SK-N-SH (cell line): ENCODE measurements at regions of chr18 and their contacts with region 1.

Region 1: DNA sequence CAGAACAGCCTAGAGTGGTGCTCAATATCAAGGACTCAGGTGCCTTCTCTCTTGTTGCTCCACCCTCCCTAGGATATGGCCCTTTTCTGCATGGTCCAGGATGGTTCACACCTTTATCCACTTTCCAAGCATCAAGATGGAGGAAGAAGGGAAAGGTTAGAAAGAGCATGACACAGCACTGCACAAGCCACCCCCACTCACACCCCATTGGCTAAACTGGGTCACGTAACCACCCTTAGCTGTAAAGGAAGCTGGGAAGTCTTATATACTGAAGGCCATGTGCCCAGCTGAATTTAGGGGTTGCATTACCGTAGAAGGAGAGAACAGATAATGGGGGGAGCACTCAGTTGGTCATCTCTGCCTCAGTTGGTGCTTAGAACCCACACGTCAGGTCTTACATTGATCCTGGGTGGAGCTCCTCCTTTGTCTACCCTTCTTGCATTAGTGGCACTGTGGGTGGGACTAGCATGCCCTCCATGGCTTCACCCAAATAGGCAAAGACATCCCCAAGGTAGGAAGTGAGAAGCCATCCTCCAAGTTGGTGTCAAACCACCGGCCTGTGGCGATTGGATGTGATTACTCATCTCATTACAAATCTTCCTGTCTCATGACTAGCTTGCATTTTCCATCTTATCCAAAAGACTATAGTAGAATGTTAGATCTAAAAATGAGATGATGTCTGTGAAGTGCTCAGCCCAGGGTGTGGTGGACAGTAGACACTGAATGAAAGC is 248.5 kb downstream of the HAUS1 start:
- DNase-seq: no peak
- H3K4me3 ChIP-seq: no peak overlapping the region
- H3K27ac ChIP-seq: no peak overlapping the region
- H3K4me1 ChIP-seq: peaks cover 0 to 51% of the 10 kb centered on the region in 2 experiments; a peak in 2 of 4 replicates
- H3K27me3 ChIP-seq: no peaks in the 10 kb centered on the region
- CTCF ChIP-seq: no peak
- EP300 ChIP-seq: no peak
- RAD21 ChIP-seq: no peak

Region 2: DNA sequence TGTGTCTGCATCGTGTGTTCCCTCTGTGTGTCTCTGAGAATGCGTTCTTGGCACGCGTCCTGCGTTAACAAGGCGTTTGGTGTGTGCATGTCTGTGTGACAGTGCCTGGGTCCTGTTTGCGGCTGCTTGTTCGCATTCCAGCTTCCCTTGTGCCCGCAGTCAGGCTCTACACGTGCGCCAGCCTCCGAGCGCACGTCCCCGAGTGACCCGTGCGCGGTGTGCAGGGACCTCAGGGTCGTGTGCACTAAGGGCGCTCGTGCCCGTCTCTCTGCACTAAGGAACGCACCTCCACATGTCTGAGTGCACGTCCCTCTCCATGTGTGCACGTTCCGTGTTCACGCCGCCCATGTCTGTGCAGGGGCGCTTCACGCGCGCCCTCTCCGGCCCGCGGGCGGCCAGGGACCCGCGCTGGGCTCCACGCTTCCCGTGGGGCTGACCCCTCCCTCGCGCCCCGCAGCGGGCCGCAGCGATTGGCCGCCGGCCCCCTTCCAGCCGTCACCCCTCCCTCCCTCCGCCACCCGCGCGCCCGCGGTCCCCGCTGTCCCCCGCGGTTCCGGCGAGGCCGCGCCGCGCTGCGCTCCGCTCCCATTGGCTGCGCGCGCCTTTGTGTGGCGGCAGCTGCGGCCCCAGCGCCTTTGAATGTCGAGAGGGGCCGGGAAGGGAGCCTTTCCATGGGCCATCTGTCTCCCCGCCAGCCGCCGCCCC is 19.1 kb before region 1 on chr18:
- CTCF ChIA-PET with region 1: interaction called, 11 read pairs
- POLR2A ChIA-PET with region 1: interaction called, 11 read pairs
- DNase-seq: peak; percentile 96
- H3K4me3 ChIP-seq: peak overlapping the region; percentile 57 to 60
- H3K27ac ChIP-seq: peak overlapping the region in 1 of 2 experiments; percentile 86; a peak in 2 of 4 replicates
- H3K4me1 ChIP-seq: peaks cover 11 to 41% of the 10 kb centered on the region in 2 experiments; a peak in 3 of 4 replicates
- H3K27me3 ChIP-seq: peaks cover 6% of the 10 kb centered on the region; the same call in 1 of the 2 replicates
- CTCF ChIP-seq: no peak
- EP300 ChIP-seq: no peak
- RAD21 ChIP-seq: no peak

Region 3: DNA sequence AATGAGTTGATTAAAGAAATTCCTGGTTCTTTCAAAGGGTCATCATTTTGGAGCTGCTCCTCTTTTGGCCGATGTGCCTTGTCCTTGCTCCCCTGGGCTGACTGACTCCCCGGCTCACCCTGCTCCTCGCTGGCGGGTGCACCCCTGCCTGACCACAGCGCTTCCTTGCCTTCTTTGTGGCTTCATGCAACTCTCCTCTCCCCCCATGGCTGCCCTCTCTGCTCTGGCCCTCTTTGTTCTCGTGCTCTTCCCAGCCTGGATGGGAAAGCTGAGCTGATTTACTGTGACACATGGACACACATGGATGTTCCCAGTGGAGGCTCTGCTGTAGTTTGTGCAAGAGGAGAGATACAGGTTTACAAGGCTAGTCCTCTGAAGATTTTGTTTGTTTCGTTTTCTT is 13.9 kb before region 1 on chr18:
- CTCF ChIA-PET with region 1: interaction called, 11 read pairs
- POLR2A ChIA-PET with region 1: interaction called, 11 read pairs
- DNase-seq: no peak
- H3K4me3 ChIP-seq: no peak overlapping the region
- H3K27ac ChIP-seq: peak overlapping the region in 1 of 2 experiments; percentile 71; a peak in 1 of 4 replicates
- H3K4me1 ChIP-seq: peaks cover 11 to 42% of the 10 kb centered on the region in 2 experiments; a peak in 3 of 4 replicates
- H3K27me3 ChIP-seq: no peaks in the 10 kb centered on the region
- CTCF ChIP-seq: no peak
- EP300 ChIP-seq: no peak
- RAD21 ChIP-seq: no peak

Region 4: GRCh38 chr18:47795434-47795814 is 1442.7 kb after region 1 on chr18:
- CTCF ChIA-PET with region 1: no interaction called
- POLR2A ChIA-PET with region 1: no interaction called
- DNase-seq: peak; percentile 40
- H3K4me3 ChIP-seq: no peak overlapping the region
- H3K27ac ChIP-seq: no peak overlapping the region
- H3K4me1 ChIP-seq: peaks cover 0 to 20% of the 10 kb centered on the region in 2 experiments; a peak in 1 of 4 replicates
- H3K27me3 ChIP-seq: no peaks in the 10 kb centered on the region; the same call in 1 of the 2 replicates
- CTCF ChIP-seq: no peak
- EP300 ChIP-seq: no peak
- RAD21 ChIP-seq: no peak